Right lobe of liver (tissue), 6 donors: ENCODE measurements at regions of chr12 and their contacts with region 1.

Region 1: DNA sequence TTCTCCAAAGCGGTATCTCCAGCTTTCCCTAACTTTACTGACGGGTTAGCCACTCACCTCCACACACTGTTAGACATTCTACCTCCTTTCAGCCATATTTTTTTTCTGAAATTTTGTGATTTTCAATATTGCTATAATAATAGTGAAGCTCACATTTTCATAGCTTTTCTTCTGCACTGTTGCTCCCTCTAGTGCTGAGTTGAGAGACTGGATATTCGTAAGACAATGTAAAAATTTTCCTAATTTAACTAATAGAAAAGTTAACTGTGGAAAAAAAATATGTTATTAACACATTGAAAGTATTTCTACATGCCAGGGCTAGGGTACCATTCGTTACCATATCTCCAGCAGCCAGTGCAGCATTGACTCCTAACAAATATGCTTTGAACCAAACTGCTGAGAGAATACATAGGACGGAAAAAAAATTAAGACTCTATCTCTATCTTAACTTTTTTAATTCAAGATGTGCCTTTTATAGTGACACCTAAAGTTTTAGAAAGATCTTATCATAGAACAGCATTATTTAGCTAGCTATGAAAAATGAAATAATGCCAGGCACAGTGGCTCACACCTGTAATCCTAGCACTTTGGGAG is 48.7 kb upstream of the ABCC9 start:
- DNase-seq: no peak
- ATAC-seq: peak; percentile 56 to 65 (median 62)
- H3K4me3 ChIP-seq: no peak overlapping the region
- H3K27ac ChIP-seq: no peak overlapping the region
- H3K4me1 ChIP-seq: no peaks in the 10 kb centered on the region
- H3K27me3 ChIP-seq: no peaks in the 10 kb centered on the region
- CTCF ChIP-seq: peak; percentile 58 to 67 (median 66)
- POLR2A ChIP-seq: no peak

Region 2: GRCh38 chr12:21697904-21698630 is 291.8 kb before region 1 on chr12:
- intact Hi-C with region 1: loop called (anchors 10 kb)
- DNase-seq: no peak
- ATAC-seq: peak; percentile 49 to 76 (median 70)
- H3K4me3 ChIP-seq: peak overlapping the region; percentile 7 to 47 (median 21)
- H3K27ac ChIP-seq: peak overlapping the region in 2 of 3 donors; percentile 38 to 41
- H3K4me1 ChIP-seq: no peaks in the 10 kb centered on the region
- H3K27me3 ChIP-seq: no peaks in the 10 kb centered on the region
- CTCF ChIP-seq: peak; percentile 63 to 71 (median 67)
- POLR2A ChIP-seq: no peak

Region 3: DNA sequence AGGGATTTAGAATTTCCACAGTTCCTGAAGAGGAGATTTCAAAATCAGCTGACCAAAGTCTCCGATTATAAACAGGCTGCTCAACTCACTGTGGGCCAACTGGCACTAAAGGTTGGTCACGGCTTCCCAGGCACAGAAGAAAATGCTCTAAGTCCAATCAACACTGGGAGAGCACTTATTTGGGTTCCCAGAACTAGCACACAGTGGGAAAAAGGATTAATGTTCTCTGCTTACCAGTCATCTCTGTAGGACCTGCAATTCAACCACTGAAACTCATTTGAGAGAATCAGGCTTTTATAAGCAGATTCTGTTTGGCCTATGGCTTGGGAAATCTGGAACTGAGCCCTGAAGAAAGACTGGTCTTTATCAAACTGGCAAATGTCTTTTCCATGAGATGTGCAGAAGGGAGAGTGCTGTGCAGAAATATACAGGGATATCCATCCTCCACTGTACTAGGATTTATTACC is 98.1 kb before region 1 on chr12:
- intact Hi-C with region 1: no loop called
- DNase-seq: peak; percentile 63 to 88 (median 83)
- ATAC-seq: peak; percentile 74 to 86 (median 80)
- H3K4me3 ChIP-seq: peak overlapping the region; percentile 6 to 38 (median 26)
- H3K27ac ChIP-seq: peak overlapping the region; percentile 71 to 93 (median 90)
- H3K4me1 ChIP-seq: peaks cover 0 to 21% (median 3%) of the 10 kb centered on the region in 4 donors
- H3K27me3 ChIP-seq: no peaks in the 10 kb centered on the region
- CTCF ChIP-seq: no peak
- POLR2A ChIP-seq: peak; percentile 54